Naive thymus-derived CD4-positive, alpha-beta T cell (primary cell): ENCODE measurements at regions of chr2 and their contacts with region 1.

Region 1: DNA sequence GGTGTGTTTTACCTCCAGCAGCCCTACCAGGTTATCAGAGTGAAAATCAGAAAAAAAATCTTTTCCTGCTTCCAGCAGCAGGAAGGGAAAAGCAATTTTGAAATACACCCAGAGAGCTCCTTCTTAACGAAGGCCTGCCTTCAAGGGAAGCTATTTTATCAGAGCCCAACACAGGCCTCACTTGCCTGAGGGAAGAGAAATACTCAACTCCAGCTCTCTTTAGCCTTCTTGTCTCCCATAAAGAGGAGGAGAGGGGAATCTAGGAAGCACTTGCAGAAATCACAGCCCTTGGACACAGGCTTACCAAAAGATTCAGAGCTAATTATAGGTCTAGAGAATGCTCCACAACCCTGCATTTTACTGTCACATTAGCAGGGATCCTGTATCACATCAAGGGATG is 896.1 kb upstream of the CNTNAP5 start:
- DNase-seq: no peak
- ATAC-seq: no peak
- H3K4me3 ChIP-seq: no peak overlapping the region
- H3K4me3 Mint-ChIP-seq: no peak overlapping the region
- H3K27ac ChIP-seq: no peak overlapping the region
- H3K27ac Mint-ChIP-seq: no peak overlapping the region
- H3K4me1 ChIP-seq: no peaks in the 10 kb centered on the region
- H3K4me1 Mint-ChIP-seq: no peaks in the 10 kb centered on the region
- H3K27me3 ChIP-seq: no peaks in the 10 kb centered on the region
- H3K27me3 Mint-ChIP-seq: no peaks in the 10 kb centered on the region

Region 2: GRCh38 chr2:123164216-123164615 is 35.3 kb after region 1 on chr2:
- CTCF ChIA-PET with region 1: no interaction called
- POLR2A ChIA-PET with region 1: no interaction called
- intact Hi-C with region 1: loop called in 1 of 2 experiments (anchors 5 kb)
- DNase-seq: no peak
- ATAC-seq: no peak
- H3K4me3 ChIP-seq: no peak overlapping the region
- H3K4me3 Mint-ChIP-seq: no peak overlapping the region
- H3K27ac ChIP-seq: no peak overlapping the region
- H3K27ac Mint-ChIP-seq: no peak overlapping the region
- H3K4me1 ChIP-seq: no peaks in the 10 kb centered on the region
- H3K4me1 Mint-ChIP-seq: no peaks in the 10 kb centered on the region
- H3K27me3 ChIP-seq: no peaks in the 10 kb centered on the region
- H3K27me3 Mint-ChIP-seq: no peaks in the 10 kb centered on the region

Region 3: GRCh38 chr2:124953921-124954320 is 1825.0 kb after region 1 on chr2:
- CTCF ChIA-PET with region 1: no interaction called
- POLR2A ChIA-PET with region 1: no interaction called
- intact Hi-C with region 1: loop called in 1 of 2 experiments (anchors 5 kb)
- DNase-seq: no peak
- ATAC-seq: no peak
- H3K4me3 ChIP-seq: no peak overlapping the region
- H3K4me3 Mint-ChIP-seq: no peak overlapping the region
- H3K27ac ChIP-seq: no peak overlapping the region
- H3K27ac Mint-ChIP-seq: no peak overlapping the region
- H3K4me1 ChIP-seq: no peaks in the 10 kb centered on the region
- H3K4me1 Mint-ChIP-seq: peaks cover 0 to 1% (median 0%) of the 10 kb centered on the region in 7 donors
- H3K27me3 ChIP-seq: no peaks in the 10 kb centered on the region
- H3K27me3 Mint-ChIP-seq: no peaks in the 10 kb centered on the region